IMR-90 (cell line): ENCODE measurements at regions of chr14 and their contacts with region 1.

Region 1: GRCh38 chr14:51283402-51284085 is 43.5 kb downstream of the TMX1 start:
- DNase-seq: peak; percentile 93
- ATAC-seq: peak; percentile 95
- H3K4me3 ChIP-seq: no peak overlapping the region
- H3K27ac ChIP-seq: no peak overlapping the region
- H3K4me1 ChIP-seq: peaks cover 6% of the 10 kb centered on the region; the same call in 1 of the 2 replicates
- H3K27me3 ChIP-seq: no peaks in the 10 kb centered on the region
- CTCF ChIP-seq: peak; percentile 98
- POLR2A ChIP-seq: peak; percentile 43; the same call in 1 of the 2 replicates
- RAD21 ChIP-seq: peak; percentile 96

Region 2: DNA sequence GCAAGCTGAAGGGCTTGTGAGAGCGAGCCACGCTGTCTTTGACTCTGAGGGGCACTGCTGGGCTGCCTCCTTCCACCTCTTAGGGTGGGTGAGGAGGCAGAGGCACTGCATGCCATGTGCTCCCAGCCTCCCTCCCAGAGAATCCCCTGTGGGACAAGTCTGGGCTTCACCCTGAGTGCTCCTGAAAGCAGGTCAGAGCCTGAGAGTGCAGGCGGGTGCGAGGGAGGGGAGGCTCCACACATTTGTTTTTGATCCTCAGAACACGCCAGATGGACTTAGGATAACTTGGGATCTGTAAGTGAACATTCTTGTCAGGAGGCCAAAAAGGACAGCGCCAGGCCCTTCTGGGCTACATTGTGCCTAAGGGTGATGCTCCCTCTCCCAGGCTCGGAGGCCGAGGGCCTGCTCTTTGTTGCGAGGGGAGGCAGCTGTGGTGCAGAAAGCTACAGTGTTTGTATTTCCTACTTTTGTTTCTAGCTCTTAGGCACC is 111.9 kb after region 1 on chr14:
- CTCF ChIA-PET with region 1: interaction called, 3 read pairs
- POLR2A ChIA-PET with region 1: no interaction called
- dilution Hi-C with region 1: no loop called
- in situ Hi-C with region 1: no loop called
- intact Hi-C with region 1: loop called (anchors 10 kb)
- DNase-seq: peak; percentile 89
- ATAC-seq: peak; percentile 61
- H3K4me3 ChIP-seq: no peak overlapping the region
- H3K27ac ChIP-seq: peak overlapping the region; percentile 91
- H3K4me1 ChIP-seq: peaks cover 27% of the 10 kb centered on the region
- H3K27me3 ChIP-seq: no peaks in the 10 kb centered on the region
- CTCF ChIP-seq: 0 out of 2 replicates have a peak, but pooled peaks have one; percentile 19
- POLR2A ChIP-seq: no peak
- RAD21 ChIP-seq: peak; percentile 28; the same call in 1 of the 2 replicates

Region 3: GRCh38 chr14:51547260-51547659 is 263.7 kb after region 1 on chr14:
- CTCF ChIA-PET with region 1: interaction called, 4 read pairs
- POLR2A ChIA-PET with region 1: no interaction called
- dilution Hi-C with region 1: no loop called
- in situ Hi-C with region 1: no loop called
- intact Hi-C with region 1: loop called (anchors 2 kb)
- DNase-seq: peak; percentile 100
- ATAC-seq: peak; percentile 93
- H3K4me3 ChIP-seq: no peak overlapping the region
- H3K27ac ChIP-seq: no peak overlapping the region
- H3K4me1 ChIP-seq: peaks cover 17% of the 10 kb centered on the region
- H3K27me3 ChIP-seq: no peaks in the 10 kb centered on the region
- CTCF ChIP-seq: no peak
- POLR2A ChIP-seq: peak; percentile 31; the same call in 1 of the 2 replicates
- RAD21 ChIP-seq: no peak; the same call in 1 of the 2 replicates

Region 4: DNA sequence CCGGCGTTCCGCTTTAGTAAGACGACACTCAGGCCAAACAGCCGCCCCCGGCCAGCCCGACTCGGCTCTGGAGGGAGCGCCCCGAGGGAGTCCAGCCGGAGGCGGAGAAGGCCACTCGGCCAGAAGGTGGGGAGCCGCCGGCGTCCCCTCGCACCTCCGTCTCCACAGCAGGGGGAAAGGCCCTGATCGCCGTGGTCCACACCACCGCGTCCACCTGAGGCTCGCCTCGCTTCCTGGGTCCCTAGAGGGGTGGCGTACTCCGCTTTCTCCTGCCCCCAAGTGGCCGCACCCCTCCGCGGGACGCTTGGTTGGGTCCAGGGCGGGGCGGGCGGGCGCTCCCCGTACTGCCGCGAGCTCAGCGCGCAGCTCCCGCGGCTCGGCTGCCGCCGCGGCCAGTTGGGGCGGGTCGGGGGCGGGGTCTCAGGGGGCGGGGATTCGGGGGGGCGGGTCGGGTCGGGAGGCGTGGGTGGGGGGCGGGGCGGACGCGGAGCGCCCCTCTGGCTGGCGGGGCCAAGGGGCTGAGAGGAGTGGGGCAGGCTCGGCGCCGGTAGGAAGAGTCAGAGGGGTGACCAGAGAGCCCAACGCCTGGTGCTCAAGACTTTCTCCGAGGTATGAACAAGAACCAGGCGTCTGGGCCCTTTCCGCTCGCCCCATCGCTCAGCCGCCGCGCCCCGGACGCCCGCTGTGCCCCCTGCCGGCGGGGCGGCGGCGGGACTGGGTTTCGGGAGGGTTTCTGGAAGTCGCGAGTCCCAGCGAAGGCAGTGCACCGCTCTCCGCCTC is 368.0 kb after region 1 on chr14 and contains the start of gene FRMD6:
- CTCF ChIA-PET with region 1: interaction called, 10 read pairs
- POLR2A ChIA-PET with region 1: interaction called, 3 read pairs
- dilution Hi-C with region 1: no loop called
- in situ Hi-C with region 1: no loop called
- intact Hi-C with region 1: loop called (anchors 1 kb)
- DNase-seq: peak; percentile 90
- ATAC-seq: peak; percentile 85
- H3K4me3 ChIP-seq: peak within 1 kb of the TSS; percentile 79
- H3K27ac ChIP-seq: peak within 1 kb of the TSS; percentile 99
- H3K4me1 ChIP-seq: no peaks in the 10 kb centered on the region
- H3K27me3 ChIP-seq: no peaks in the 10 kb centered on the region
- CTCF ChIP-seq: peak; percentile 80
- POLR2A ChIP-seq: peak; percentile 91
- RAD21 ChIP-seq: peak; percentile 70
- total RNA-seq, gene FRMD6: 620 and 682 TPM in 2 replicates

Region 5: DNA sequence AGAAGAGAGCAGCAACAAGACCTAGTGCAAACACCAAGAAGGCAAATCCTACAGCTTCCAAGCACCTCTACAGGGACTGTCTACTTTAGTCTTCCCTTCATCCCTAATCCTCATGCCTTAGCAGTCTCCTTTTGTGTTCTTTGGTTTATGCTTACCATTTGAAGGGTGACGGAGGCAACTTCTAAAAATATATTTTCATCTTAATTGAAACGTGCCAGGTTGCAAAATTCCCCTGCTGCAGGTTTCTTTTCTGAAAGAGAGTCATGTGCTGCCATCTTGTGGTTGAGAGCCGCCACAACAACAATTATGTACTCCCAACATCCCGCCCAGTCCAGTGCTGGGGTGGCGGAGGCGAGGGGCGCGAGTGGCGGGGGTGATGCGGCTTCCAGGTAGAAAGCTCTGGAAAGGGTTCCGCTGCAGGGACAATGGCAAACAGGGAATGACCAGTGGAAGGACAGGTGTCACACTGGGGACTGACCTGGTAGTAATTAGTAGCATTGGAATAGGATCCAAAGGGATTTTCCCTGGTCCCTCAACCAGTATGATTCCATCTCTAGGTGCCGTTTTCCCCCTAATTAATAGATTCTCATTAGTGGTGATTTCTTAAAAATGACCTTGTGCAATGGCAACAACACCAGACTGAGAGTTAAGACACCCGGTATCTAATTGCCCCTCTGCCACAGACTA is 496.6 kb after region 1 on chr14:
- CTCF ChIA-PET with region 1: interaction called, 29 read pairs
- POLR2A ChIA-PET with region 1: no interaction called
- dilution Hi-C with region 1: no loop called
- in situ Hi-C with region 1: loop called (anchors 10 kb)
- intact Hi-C with region 1: loop called (anchors 1 kb)
- DNase-seq: peak; percentile 59
- ATAC-seq: peak; percentile 73
- H3K4me3 ChIP-seq: no peak overlapping the region
- H3K27ac ChIP-seq: no peak overlapping the region
- H3K4me1 ChIP-seq: peaks cover 2% of the 10 kb centered on the region; the same call in 1 of the 2 replicates
- H3K27me3 ChIP-seq: no peaks in the 10 kb centered on the region
- CTCF ChIP-seq: peak; percentile 71
- POLR2A ChIP-seq: no peak
- RAD21 ChIP-seq: peak; percentile 84